AG04449 (cell line): ENCODE measurements at regions of chr15 and their contacts with region 1.

Region 1: GRCh38 chr15:98856218-98856907 is 151.2 kb downstream of the PGPEP1L start:
- DNase-seq: peak; percentile 92
- H3K4me3 ChIP-seq: no peak overlapping the region
- CTCF ChIP-seq: no peak

Region 2: DNA sequence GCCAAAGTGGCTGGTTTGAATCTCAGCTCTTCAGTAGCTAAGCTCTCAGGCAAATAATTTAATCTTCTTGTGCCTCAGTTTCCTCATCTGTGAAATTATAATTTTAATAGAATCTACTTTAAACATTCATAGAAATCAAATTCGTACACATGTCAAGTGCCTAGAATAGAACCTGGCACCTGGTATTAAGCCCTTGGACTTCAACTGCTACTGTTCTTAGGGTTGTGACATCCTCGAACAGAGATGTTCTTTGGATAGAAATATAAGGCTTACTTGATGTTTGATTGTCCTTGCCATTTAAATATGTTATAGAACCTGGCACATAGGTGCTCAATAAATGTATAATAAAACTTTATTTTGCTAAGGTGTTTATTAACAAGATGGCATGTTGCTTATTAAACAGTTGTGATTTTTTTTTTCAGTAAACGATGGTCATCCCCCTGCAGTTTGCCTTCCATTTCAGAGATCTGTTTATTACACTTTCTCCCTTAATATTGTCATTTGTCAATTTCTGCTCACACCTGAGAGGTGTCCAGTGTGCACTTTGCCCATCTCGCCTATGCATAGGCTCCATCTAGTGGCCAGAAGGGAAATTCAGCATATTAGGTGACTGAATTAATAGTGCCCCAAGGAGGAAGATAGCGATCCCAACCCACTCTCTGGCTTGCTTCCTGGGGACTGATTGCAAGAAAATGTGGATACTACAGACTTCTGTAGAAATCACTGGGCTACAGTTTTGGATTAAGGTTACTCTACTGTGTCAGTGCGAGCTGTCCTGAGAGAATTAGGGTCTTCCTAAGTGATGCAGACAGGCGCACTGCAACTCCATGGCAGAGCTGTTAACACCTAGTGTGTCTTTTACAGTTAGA is 197.3 kb before region 1 on chr15:
- CTCF ChIA-PET with region 1: interaction called, 10 read pairs
- POLR2A ChIA-PET with region 1: no interaction called
- DNase-seq: no peak
- H3K4me3 ChIP-seq: no peak overlapping the region
- CTCF ChIP-seq: peak; percentile 70

Region 3: GRCh38 chr15:98889930-98890695 is 33.8 kb after region 1 on chr15:
- CTCF ChIA-PET with region 1: interaction called, 7 read pairs
- POLR2A ChIA-PET with region 1: interaction called, 11 read pairs
- DNase-seq: peak; percentile 69
- H3K4me3 ChIP-seq: peak overlapping the region; percentile 21
- CTCF ChIP-seq: no peak

Region 4: DNA sequence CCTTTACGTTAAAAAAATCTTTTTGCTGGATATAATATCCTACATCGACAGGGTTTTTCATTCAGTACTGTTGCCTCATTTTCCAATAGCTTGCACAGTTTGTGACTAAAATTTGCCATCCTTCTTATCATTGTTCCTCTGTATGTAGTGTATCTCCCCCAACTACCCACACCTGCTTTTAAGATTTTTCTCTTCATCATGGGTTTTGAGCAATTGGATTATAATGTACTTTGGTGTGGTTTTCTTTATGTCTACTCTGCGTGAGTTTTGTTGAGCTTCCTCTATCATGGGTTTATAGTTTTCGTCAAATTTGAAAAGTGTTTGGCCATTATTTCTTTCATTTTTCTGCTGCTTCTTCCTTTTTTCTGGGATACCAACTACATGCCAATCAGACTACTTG is 669.8 kb after region 1 on chr15:
- CTCF ChIA-PET with region 1: no interaction called
- POLR2A ChIA-PET with region 1: no interaction called
- DNase-seq: no peak
- H3K4me3 ChIP-seq: no peak overlapping the region
- CTCF ChIP-seq: no peak

Region 5: GRCh38 chr15:99545605-99546004 is 689.2 kb after region 1 on chr15:
- CTCF ChIA-PET with region 1: no interaction called
- POLR2A ChIA-PET with region 1: no interaction called
- DNase-seq: no peak
- H3K4me3 ChIP-seq: no peak overlapping the region
- CTCF ChIP-seq: no peak